ENCODE measurements at regions of chr4 and their contacts with region 1.

Region 1: GRCh38 chr4:69054578-69055200 is 41.6 kb upstream of the UGT2B7 start:
- DNase-seq: no peak
- H3K4me3 Mint-ChIP-seq: no peak overlapping the region
- H3K27ac Mint-ChIP-seq: no peak overlapping the region
- H3K4me1 Mint-ChIP-seq: no peaks in the 10 kb centered on the region
- H3K27me3 Mint-ChIP-seq: no peaks in the 10 kb centered on the region

Region 2: DNA sequence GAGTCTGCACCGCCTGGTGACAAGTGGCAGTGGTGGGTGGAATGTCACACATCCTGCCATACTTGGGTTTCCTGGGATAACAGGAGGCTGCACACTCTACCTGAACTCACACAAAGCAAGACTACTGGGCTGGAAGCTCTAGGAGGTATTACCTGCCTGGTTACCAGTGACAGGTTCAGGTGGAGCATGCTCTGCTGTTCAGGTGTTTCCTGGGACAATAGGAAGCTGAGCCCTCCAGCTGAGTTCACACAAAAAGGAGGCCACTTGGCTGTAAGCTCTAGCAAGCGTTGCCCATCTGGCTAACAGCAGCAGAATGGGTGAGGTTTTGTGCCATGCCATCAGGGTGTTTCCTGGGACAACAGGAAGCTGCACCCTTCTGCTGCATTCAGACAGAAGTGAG is 24.2 kb after region 1 on chr4:
- intact Hi-C with region 1: loop called (anchors 1 kb)
- DNase-seq: no peak
- H3K4me3 Mint-ChIP-seq: no peak overlapping the region
- H3K27ac Mint-ChIP-seq: no peak overlapping the region
- H3K4me1 Mint-ChIP-seq: no peaks in the 10 kb centered on the region
- H3K27me3 Mint-ChIP-seq: no peaks in the 10 kb centered on the region